ENCODE measurements at regions of chr19 and their contacts with region 1.

Region 1: GRCh38 chr19:18571564-18572300 is at the start of gene UBA52:
- DNase-seq: peak; percentile 97 to 99 (median 98)
- ATAC-seq: peak; percentile 92 to 95
- H3K4me3 Mint-ChIP-seq: peak within 1 kb of the TSS; percentile 86 to 99 (median 95)
- H3K27ac Mint-ChIP-seq: peak within 1 kb of the TSS; percentile 88 to 99 (median 98)
- H3K4me1 Mint-ChIP-seq: peaks cover 13 to 26% (median 19%) of the 10 kb centered on the region in 4 donors
- H3K27me3 Mint-ChIP-seq: no peaks in the 10 kb centered on the region
- polyA plus RNA-seq, gene UBA52: 1,743 to 2,077 (median 1,903) TPM

Region 2: GRCh38 chr19:18503971-18504885 is 67.5 kb before region 1 on chr19:
- POLR2A ChIA-PET with region 1: no interaction called
- DNase-seq: no peak
- ATAC-seq: no peak
- H3K4me3 Mint-ChIP-seq: peak overlapping the region in 3 of 10 donors; percentile 7 to 76 (median 19)
- H3K27ac Mint-ChIP-seq: peak overlapping the region in 7 of 10 donors; percentile 18 to 95 (median 74)
- H3K4me1 Mint-ChIP-seq: peaks cover 55 to 99% (median 96%) of the 10 kb centered on the region in 4 donors
- H3K27me3 Mint-ChIP-seq: no peaks in the 10 kb centered on the region

Region 3: DNA sequence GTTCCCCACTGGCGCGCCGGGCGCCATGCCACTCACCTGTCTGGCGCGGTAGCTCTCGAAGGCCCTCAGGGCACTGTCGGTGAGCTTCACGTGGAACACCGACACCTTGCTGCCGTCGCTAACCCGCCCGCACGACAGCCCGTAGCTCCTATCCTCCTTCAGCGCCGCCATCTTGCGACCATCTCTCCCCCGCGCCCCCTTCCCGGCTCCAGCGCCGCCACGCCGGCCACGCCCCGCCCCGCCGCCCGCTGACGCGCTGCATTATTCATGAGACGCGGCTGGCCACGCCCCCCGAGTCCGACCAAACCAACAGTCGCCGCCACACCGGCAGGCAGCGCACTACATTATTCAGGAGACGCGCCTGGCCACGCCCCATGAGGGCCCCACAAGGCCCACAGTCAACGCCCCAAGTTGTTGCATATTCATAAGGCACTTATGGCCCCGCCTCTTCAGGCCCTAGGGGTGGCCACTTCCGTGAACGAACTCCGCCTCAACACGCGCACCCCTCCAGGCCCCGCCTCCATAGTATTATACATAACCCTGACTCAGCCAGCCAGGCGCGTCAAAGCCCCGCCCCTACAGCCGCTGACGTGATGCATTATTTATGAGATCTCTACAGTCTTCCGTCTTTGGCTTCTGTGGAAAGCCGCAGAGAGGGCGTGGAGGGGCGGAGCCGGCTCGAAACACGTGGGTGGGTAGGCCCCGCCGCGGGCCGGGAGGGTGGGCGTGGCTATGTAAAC is 49.7 kb before region 1 on chr19 and contains the start of gene ELL:
- POLR2A ChIA-PET with region 1: interaction called, 38 read pairs
- DNase-seq: peak; percentile 98 to 100 (median 100)
- ATAC-seq: peak; percentile 87
- H3K4me3 Mint-ChIP-seq: peak within 1 kb of the TSS; percentile 86 to 99 (median 94)
- H3K27ac Mint-ChIP-seq: peak within 1 kb of the TSS; percentile 93 to 99 (median 96)
- H3K4me1 Mint-ChIP-seq: peaks cover 7 to 33% (median 25%) of the 10 kb centered on the region in 4 donors
- H3K27me3 Mint-ChIP-seq: no peaks in the 10 kb centered on the region
- polyA plus RNA-seq, gene ELL: 7.6 to 11.0 (median 9.3) TPM

Region 4: GRCh38 chr19:18542936-18543815 is 28.6 kb before region 1 on chr19 and contains the start of gene FKBP8:
- POLR2A ChIA-PET with region 1: interaction called, 14 read pairs
- DNase-seq: peak; percentile 85 to 96 (median 91)
- ATAC-seq: peak; percentile 98
- H3K4me3 Mint-ChIP-seq: peak within 1 kb of the TSS; percentile 86 to 94 (median 92)
- H3K27ac Mint-ChIP-seq: peak within 1 kb of the TSS; percentile 90 to 98 (median 95)
- H3K4me1 Mint-ChIP-seq: peaks cover 7 to 36% (median 30%) of the 10 kb centered on the region in 4 donors
- H3K27me3 Mint-ChIP-seq: no peaks in the 10 kb centered on the region
- polyA plus RNA-seq, gene FKBP8: 87.0 to 125 (median 106) TPM

Region 5: DNA sequence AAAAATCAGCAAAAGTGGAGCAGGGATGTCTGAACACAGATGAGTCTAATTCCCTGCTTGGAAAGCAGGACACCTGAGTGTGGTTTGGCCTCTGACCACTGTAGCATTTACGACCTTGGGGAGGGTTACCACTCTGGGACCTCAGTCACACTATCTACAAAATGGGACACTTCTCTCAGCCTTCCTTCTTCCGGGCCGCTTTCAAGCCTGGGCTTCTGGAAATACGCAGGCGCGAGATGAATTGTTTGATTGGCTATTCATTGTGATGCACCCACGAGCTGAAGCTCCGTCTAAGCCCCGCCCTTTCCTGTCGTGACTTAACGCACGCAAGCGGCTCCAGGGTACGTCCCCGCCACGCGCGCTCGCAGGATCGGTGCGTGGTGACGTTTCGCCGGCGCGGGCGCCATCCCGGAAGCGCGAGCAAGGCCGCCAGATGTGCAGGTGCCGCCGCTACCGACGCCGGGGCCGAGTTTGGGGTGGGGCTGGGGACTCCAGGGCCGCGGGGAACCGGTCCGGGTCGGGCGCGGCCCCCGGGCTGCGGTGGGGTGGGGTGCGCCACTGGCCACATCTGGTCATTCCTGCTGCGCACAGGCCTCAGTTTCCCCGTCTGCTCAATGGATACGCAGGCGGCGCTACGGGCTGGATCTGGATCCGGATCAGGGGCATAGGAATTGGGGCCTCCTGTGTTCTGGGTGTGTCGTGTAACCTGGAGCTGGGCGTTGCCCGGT is 14.1 kb before region 1 on chr19 and contains the start of gene KXD1:
- POLR2A ChIA-PET with region 1: interaction called, 52 read pairs
- DNase-seq: peak; percentile 90 to 99 (median 98)
- ATAC-seq: peak; percentile 98 to 99
- H3K4me3 Mint-ChIP-seq: peak within 1 kb of the TSS; percentile 80 to 94 (median 90)
- H3K27ac Mint-ChIP-seq: peak within 1 kb of the TSS; percentile 89 to 99 (median 95)
- H3K4me1 Mint-ChIP-seq: peaks cover 11 to 30% (median 21%) of the 10 kb centered on the region in 4 donors
- H3K27me3 Mint-ChIP-seq: no peaks in the 10 kb centered on the region
- polyA plus RNA-seq, gene KXD1: 68.3 to 80.2 (median 79.4) TPM

Region 6: GRCh38 chr19:18594096-18594823 is 22.5 kb after region 1 on chr19:
- POLR2A ChIA-PET with region 1: interaction called, 107 read pairs
- DNase-seq: peak; percentile 66 to 85 (median 78)
- ATAC-seq: peak; percentile 73 to 77
- H3K4me3 Mint-ChIP-seq: peak overlapping the region; percentile 64 to 91 (median 79)
- H3K27ac Mint-ChIP-seq: peak overlapping the region in 9 of 10 donors; percentile 40 to 89 (median 78)
- H3K4me1 Mint-ChIP-seq: peaks cover 14 to 31% (median 30%) of the 10 kb centered on the region in 4 donors
- H3K27me3 Mint-ChIP-seq: peaks cover 0 to 4% (median 0%) of the 10 kb centered on the region in 5 donors

Region 7: GRCh38 chr19:18683213-18683939 is 111.6 kb after region 1 on chr19 and contains the start of gene CRTC1:
- POLR2A ChIA-PET with region 1: no interaction called
- DNase-seq: peak; percentile 91 to 96 (median 95)
- ATAC-seq: peak; percentile 86
- H3K4me3 Mint-ChIP-seq: peak within 1 kb of the TSS; percentile 80 to 94 (median 86)
- H3K27ac Mint-ChIP-seq: peak within 1 kb of the TSS; percentile 40 to 96 (median 91)
- H3K4me1 Mint-ChIP-seq: peaks cover 13 to 51% (median 30%) of the 10 kb centered on the region in 4 donors
- H3K27me3 Mint-ChIP-seq: no peaks in the 10 kb centered on the region
- polyA plus RNA-seq, gene CRTC1: 1.2 to 2.0 (median 1.9) TPM

Measured in naive thymus-derived CD8-positive, alpha-beta T cell (primary cell).